Sigmoid colon (tissue), 7 donors: ENCODE measurements at regions of chr5 and their contacts with region 1.

Region 1: GRCh38 chr5:132490486-132491367 is at the start of gene IRF1:
- DNase-seq: peak; percentile 98
- H3K4me3 ChIP-seq: peak within 1 kb of the TSS; percentile 77 to 92 (median 86)
- H3K27ac ChIP-seq: peak within 1 kb of the TSS; percentile 98 to 100 (median 98)
- H3K4me1 ChIP-seq: peaks cover 0 to 70% (median 59%) of the 10 kb centered on the region in 4 donors
- H3K27me3 ChIP-seq: no peaks in the 10 kb centered on the region
- CTCF ChIP-seq: no peak
- EP300 ChIP-seq: peak in 1 of 4 donors; percentile 82
- POLR2A ChIP-seq: peak; percentile 87 to 95
- total RNA-seq, gene IRF1: 15.3 to 124 (median 22.7) TPM

Region 2: DNA sequence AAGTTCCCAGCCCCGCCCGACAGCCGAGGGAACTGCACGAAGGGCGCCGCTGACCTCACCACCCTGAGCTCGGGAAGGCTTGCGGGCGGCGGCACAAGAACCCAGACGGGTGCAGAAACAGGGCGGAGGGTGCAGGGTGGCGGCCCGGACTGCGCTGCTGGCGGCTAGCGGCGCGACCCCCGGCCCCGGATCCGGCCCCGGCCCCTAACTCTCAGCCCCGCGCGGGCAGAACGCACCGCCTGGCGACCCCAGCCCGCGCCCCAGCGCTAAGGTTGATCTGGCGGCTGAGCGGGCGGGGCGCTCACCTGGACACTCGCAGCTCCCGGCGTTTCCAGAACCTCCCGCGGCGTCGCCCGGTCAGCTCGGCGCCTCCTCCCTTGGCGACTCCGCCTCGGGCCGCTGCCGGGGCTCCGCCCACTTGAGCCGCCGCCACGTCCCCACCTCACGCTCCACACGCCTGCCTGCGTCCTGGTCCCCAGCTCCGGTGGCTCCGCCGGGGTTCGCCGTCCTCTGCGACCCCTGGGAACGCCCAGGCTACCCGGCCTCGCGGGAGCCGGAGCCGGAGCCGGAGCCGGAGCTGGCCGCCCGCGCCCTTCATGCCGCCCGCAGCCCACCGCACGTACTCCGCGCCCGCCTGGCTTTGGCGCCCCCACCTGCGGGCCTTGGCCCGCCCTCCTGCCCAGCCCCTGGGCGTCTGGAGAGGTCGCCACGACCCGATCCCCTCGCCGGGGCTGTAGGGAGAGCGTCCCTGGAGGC is 263.1 kb before region 1 on chr5 and contains the start of gene P4HA2:
- intact Hi-C with region 1: loop called (anchors 5 kb)
- DNase-seq: peak; percentile 93
- H3K4me3 ChIP-seq: peak within 1 kb of the TSS; percentile 46 to 78 (median 74)
- H3K27ac ChIP-seq: peak within 1 kb of the TSS; percentile 87 to 92 (median 91)
- H3K4me1 ChIP-seq: peaks cover 0 to 52% (median 50%) of the 10 kb centered on the region in 4 donors
- H3K27me3 ChIP-seq: no peaks in the 10 kb centered on the region
- CTCF ChIP-seq: peak in 3 of 4 experiments; percentile 19 to 49 (median 25)
- EP300 ChIP-seq: no peak
- POLR2A ChIP-seq: peak in 1 of 2 donors; percentile 73
- total RNA-seq, gene P4HA2: 23.9 to 35.2 (median 28.9) TPM

Region 3: GRCh38 chr5:132260714-132261551 is 229.8 kb before region 1 on chr5:
- intact Hi-C with region 1: loop called (anchors 10 kb)
- DNase-seq: peak; percentile 92
- H3K4me3 ChIP-seq: peak overlapping the region in 2 of 4 donors; percentile 7 to 91
- H3K27ac ChIP-seq: peak overlapping the region; percentile 97 to 99 (median 98)
- H3K4me1 ChIP-seq: peaks cover 0 to 83% (median 80%) of the 10 kb centered on the region in 4 donors
- H3K27me3 ChIP-seq: no peaks in the 10 kb centered on the region
- CTCF ChIP-seq: no peak
- EP300 ChIP-seq: peak in 1 of 4 donors; percentile 30
- POLR2A ChIP-seq: no peak

Region 4: DNA sequence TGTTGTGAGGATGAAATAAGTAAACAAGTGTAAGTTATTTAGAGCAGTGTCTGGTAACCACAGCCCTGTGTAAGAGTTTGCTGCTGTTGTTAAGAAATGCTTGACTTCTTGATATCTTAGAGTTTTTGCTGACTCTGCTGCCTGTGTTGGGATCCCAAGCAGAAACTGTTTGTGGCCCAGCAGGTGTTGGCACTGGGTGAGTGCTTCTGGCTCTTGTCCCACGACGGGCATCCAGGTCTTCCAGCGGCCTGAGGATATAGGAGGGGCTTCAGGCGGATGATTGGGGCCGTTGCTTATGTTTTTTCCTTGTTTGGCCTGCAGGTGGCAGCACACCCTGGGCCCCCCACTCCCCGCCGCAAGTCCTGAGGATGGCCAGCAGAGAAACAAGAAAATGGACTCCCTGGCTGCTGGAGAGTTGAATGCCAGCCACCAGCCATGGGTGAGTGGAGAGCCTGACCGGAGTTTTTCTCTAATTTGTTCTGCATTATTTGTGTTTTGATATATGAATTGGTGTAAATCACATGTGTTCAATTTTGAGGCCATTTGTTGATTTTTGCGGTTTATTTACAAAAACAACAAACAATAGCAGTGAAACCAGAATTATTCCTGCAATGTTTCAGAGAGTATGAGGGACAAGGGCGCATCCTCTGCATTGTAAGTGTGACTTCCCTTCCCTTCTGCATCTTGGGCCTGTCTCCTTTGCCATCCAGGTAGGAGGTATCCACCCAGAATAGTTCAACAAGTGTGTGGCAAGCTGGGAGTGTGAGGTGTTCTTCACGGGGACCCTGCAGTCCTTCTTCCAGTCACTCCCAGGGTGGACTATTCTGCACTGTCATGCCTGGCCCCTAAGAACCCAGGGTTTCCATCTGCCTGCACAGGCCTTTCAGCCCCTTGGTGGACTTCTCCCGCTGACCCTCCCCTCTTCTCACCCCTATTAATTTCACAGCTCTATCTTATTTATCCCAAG is 70.9 kb before region 1 on chr5:
- intact Hi-C with region 1: loop called (anchors 1 kb)
- DNase-seq: peak; percentile 87
- H3K4me3 ChIP-seq: no peak overlapping the region
- H3K27ac ChIP-seq: peak overlapping the region; percentile 67 to 98 (median 84)
- H3K4me1 ChIP-seq: peaks cover 0 to 100% (median 92%) of the 10 kb centered on the region in 4 donors
- H3K27me3 ChIP-seq: no peaks in the 10 kb centered on the region
- CTCF ChIP-seq: peak; percentile 83 to 91 (median 90)
- EP300 ChIP-seq: no peak
- POLR2A ChIP-seq: no peak